Prostate gland (tissue), 2 donors: ENCODE measurements at regions of chr6 and their contacts with region 1.

Region 1: GRCh38 chr6:158040051-158040803 is 58.6 kb downstream of the SYNJ2 start:
- DNase-seq: no peak
- H3K4me3 ChIP-seq: no peak overlapping the region
- H3K27ac ChIP-seq: peak overlapping the region; percentile 76 to 82
- H3K4me1 ChIP-seq: peaks cover 30% of the 10 kb centered on the region
- H3K27me3 ChIP-seq: no peaks in the 10 kb centered on the region
- CTCF ChIP-seq: no peak
- POLR2A ChIP-seq: no peak

Region 2: DNA sequence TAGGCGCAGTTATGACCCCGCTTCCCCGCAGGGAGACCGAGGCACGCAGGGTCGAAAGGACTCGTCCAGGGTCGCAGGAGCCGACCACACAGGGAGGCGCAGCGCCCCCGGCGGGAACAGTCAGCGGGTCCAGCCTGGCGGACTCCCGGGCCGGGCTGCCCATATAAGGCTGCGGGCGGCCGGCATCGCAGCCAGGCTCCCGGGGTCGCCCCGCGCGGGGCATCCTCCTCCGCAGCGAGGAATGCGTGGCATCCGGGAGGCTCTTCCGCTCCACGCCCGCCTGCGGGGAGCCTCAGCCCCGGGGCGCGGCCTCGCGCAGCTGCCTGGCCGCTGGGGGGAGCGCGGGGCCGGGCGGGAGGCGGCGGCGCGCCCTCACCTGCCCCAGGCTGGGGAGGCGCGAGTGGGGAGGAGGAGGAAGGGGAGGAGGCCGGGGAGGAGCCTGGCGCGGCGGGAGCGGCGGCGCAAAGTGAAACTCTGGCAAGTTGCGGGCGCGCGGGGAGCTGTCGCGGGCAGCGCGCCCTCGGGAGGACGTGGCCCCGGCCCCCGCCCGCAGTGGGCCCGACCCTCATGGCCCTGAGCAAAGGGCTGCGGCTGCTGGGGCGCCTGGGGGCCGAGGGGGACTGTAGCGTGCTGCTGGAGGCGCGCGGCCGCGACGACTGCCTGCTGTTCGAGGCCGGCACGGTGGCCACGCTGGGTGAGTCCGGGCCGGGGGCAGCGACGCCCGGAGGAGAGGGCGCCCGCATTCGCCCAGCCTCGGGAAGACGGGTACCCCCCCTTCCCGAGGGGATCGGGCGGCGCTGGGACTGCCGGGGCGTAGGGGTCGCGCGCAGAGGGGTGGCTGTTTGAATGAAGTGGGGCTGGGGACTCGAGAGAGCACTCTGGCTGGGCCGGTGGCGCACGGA is 58.6 kb before region 1 on chr6 and contains the start of gene SYNJ2:
- intact Hi-C with region 1: loop called (anchors 2 kb)
- DNase-seq: peak; percentile 83
- H3K4me3 ChIP-seq: peak within 1 kb of the TSS; percentile 88 to 98
- H3K27ac ChIP-seq: peak within 1 kb of the TSS; percentile 87 to 89
- H3K4me1 ChIP-seq: no peaks in the 10 kb centered on the region
- H3K27me3 ChIP-seq: no peaks in the 10 kb centered on the region
- CTCF ChIP-seq: peak; percentile 65 to 86 (median 70)
- POLR2A ChIP-seq: peak; percentile 86
- total RNA-seq, gene SYNJ2: 19.7 to 19.9 TPM

Region 3: DNA sequence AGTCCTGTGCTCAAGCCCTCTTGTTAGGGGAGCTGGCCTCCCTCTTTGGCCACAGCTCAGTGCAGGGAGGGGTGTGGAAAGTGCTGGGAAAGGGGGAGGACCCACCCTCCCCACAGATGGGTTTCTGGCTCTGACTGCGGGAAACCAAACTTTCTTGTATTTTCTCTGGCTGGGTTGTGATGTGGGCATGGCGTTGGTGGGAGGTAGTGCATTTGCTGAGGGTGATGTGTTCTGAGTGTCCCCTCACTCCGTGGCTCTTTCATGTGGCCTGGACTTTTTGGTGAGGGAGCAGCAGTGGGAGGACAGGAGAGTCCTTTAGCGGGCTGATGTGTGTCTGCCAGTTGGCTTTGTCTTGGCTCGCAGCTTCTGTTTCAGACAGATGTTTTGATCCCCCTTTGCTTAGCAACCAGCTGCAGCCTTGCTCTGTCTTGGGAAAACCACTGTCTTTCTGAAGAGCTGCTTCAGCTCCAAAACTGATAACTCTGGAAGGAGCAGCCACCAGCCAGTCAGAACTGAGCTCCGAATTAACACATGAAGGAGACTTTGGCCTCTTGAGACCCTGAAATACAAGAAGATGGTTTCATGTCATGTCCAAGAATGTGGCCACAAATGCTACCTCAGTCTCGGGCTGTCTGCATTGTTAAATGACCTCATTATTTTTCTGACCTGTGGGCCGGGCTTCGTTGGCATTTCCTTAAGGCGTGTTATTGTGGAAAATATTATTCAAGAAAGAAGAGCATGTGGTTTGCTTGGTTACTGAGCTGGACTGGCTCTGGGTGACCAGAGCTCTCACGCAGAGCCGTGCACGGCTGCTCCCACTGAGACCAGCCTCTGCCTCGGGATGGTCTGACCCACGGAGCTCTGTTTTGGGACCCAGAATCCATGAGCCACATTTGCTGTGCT is 37.0 kb before region 1 on chr6:
- intact Hi-C with region 1: loop called (anchors 5 kb)
- DNase-seq: no peak
- H3K4me3 ChIP-seq: no peak overlapping the region
- H3K27ac ChIP-seq: peak overlapping the region; percentile 75 to 77
- H3K4me1 ChIP-seq: peaks cover 16% of the 10 kb centered on the region
- H3K27me3 ChIP-seq: no peaks in the 10 kb centered on the region
- CTCF ChIP-seq: no peak
- POLR2A ChIP-seq: no peak

Region 4: GRCh38 chr6:158131926-158132325 is 91.7 kb after region 1 on chr6:
- intact Hi-C with region 1: no loop called
- DNase-seq: no peak
- H3K4me3 ChIP-seq: no peak overlapping the region
- H3K27ac ChIP-seq: no peak overlapping the region
- H3K4me1 ChIP-seq: no peaks in the 10 kb centered on the region
- H3K27me3 ChIP-seq: no peaks in the 10 kb centered on the region
- CTCF ChIP-seq: peak in 1 of 4 experiments; percentile 37
- POLR2A ChIP-seq: no peak